SK-N-SH (cell line): ENCODE measurements at regions of chr7 and their contacts with region 1.

Region 1: GRCh38 chr7:92768501-92769393 is 67.6 kb downstream of the CDK6 start:
- DNase-seq: peak; percentile 60
- H3K4me3 ChIP-seq: no peak overlapping the region
- H3K27ac ChIP-seq: peak overlapping the region; percentile 95 to 99
- H3K4me1 ChIP-seq: peaks cover 54 to 77% of the 10 kb centered on the region in 2 experiments
- H3K27me3 ChIP-seq: no peaks in the 10 kb centered on the region
- CTCF ChIP-seq: no peak
- EP300 ChIP-seq: peak; percentile 82 to 98; a peak in 3 of 4 replicates
- RAD21 ChIP-seq: no peak; the same call in 1 of the 2 replicates

Region 2: GRCh38 chr7:92627956-92628355 is 140.8 kb before region 1 on chr7:
- CTCF ChIA-PET with region 1: no interaction called
- POLR2A ChIA-PET with region 1: no interaction called
- DNase-seq: no peak
- H3K4me3 ChIP-seq: no peak overlapping the region
- H3K27ac ChIP-seq: no peak overlapping the region
- H3K4me1 ChIP-seq: peaks cover 5 to 36% of the 10 kb centered on the region in 2 experiments
- H3K27me3 ChIP-seq: no peaks in the 10 kb centered on the region
- CTCF ChIP-seq: no peak
- EP300 ChIP-seq: no peak
- RAD21 ChIP-seq: no peak

Region 3: GRCh38 chr7:92691578-92691977 is 77.2 kb before region 1 on chr7:
- CTCF ChIA-PET with region 1: interaction called, 24 read pairs
- POLR2A ChIA-PET with region 1: interaction called, 3 read pairs
- DNase-seq: peak; percentile 43
- H3K4me3 ChIP-seq: no peak overlapping the region
- H3K27ac ChIP-seq: peak overlapping the region in 1 of 2 experiments; percentile 58; a peak in 2 of 4 replicates
- H3K4me1 ChIP-seq: peaks cover 12 to 18% of the 10 kb centered on the region in 2 experiments
- H3K27me3 ChIP-seq: no peaks in the 10 kb centered on the region
- CTCF ChIP-seq: peak; percentile 82
- EP300 ChIP-seq: no peak
- RAD21 ChIP-seq: peak; percentile 87